CD4-positive, alpha-beta T cell (primary cell): ENCODE measurements at regions of chr1 and their contacts with region 1.

Region 1: GRCh38 chr1:8026153-8026975 is at the start of gene ERRFI1:
- DNase-seq: peak; percentile 67 to 94 (median 84)
- ATAC-seq: peak; percentile 88
- H3K4me3 ChIP-seq: peak within 1 kb of the TSS; percentile 48
- H3K4me3 Mint-ChIP-seq: peak within 1 kb of the TSS; percentile 92
- H3K27ac ChIP-seq: no peak within 1 kb of the TSS
- H3K27ac Mint-ChIP-seq: peak within 1 kb of the TSS; percentile 48
- H3K4me1 ChIP-seq: peaks cover 13% of the 10 kb centered on the region
- H3K4me1 Mint-ChIP-seq: peaks cover 13% of the 10 kb centered on the region
- H3K27me3 ChIP-seq: peaks cover 3 to 14% of the 10 kb centered on the region in 2 experiments
- H3K27me3 Mint-ChIP-seq: peaks cover 30% of the 10 kb centered on the region
- CTCF ChIP-seq: no peak
- total RNA-seq, gene ERRFI1: 3.6 TPM

Region 2: GRCh38 chr1:7975212-7975865 is 51.0 kb before region 1 on chr1:
- CTCF ChIA-PET with region 1: no interaction called
- POLR2A ChIA-PET with region 1: no interaction called
- intact Hi-C with region 1: no loop called
- DNase-seq: peak in 4 of 14 experiments; percentile 18 to 59 (median 42)
- ATAC-seq: peak; percentile 41
- H3K4me3 ChIP-seq: no peak overlapping the region
- H3K4me3 Mint-ChIP-seq: no peak overlapping the region
- H3K27ac ChIP-seq: no peak overlapping the region
- H3K27ac Mint-ChIP-seq: peak overlapping the region; percentile 24
- H3K4me1 ChIP-seq: no peaks in the 10 kb centered on the region
- H3K4me1 Mint-ChIP-seq: peaks cover 5% of the 10 kb centered on the region
- H3K27me3 ChIP-seq: no peaks in the 10 kb centered on the region
- H3K27me3 Mint-ChIP-seq: no peaks in the 10 kb centered on the region
- CTCF ChIP-seq: peak; percentile 51

Region 3: GRCh38 chr1:7992885-7993284 is 33.5 kb before region 1 on chr1:
- CTCF ChIA-PET with region 1: no interaction called
- POLR2A ChIA-PET with region 1: no interaction called
- intact Hi-C with region 1: no loop called
- DNase-seq: no peak
- ATAC-seq: no peak
- H3K4me3 ChIP-seq: no peak overlapping the region
- H3K4me3 Mint-ChIP-seq: no peak overlapping the region
- H3K27ac ChIP-seq: no peak overlapping the region
- H3K27ac Mint-ChIP-seq: no peak overlapping the region
- H3K4me1 ChIP-seq: no peaks in the 10 kb centered on the region
- H3K4me1 Mint-ChIP-seq: no peaks in the 10 kb centered on the region
- H3K27me3 ChIP-seq: no peaks in the 10 kb centered on the region
- H3K27me3 Mint-ChIP-seq: no peaks in the 10 kb centered on the region
- CTCF ChIP-seq: no peak

Region 4: GRCh38 chr1:8154621-8155052 is 128.3 kb after region 1 on chr1:
- CTCF ChIA-PET with region 1: no interaction called
- POLR2A ChIA-PET with region 1: no interaction called
- intact Hi-C with region 1: loop called in 1 of 2 experiments (anchors 2 kb)
- DNase-seq: no peak
- ATAC-seq: no peak
- H3K4me3 ChIP-seq: no peak overlapping the region
- H3K4me3 Mint-ChIP-seq: no peak overlapping the region
- H3K27ac ChIP-seq: no peak overlapping the region
- H3K27ac Mint-ChIP-seq: peak overlapping the region; percentile 34
- H3K4me1 ChIP-seq: peaks cover 53% of the 10 kb centered on the region
- H3K4me1 Mint-ChIP-seq: peaks cover 51% of the 10 kb centered on the region
- H3K27me3 ChIP-seq: no peaks in the 10 kb centered on the region
- H3K27me3 Mint-ChIP-seq: peaks cover 15% of the 10 kb centered on the region
- CTCF ChIP-seq: no peak

Region 5: DNA sequence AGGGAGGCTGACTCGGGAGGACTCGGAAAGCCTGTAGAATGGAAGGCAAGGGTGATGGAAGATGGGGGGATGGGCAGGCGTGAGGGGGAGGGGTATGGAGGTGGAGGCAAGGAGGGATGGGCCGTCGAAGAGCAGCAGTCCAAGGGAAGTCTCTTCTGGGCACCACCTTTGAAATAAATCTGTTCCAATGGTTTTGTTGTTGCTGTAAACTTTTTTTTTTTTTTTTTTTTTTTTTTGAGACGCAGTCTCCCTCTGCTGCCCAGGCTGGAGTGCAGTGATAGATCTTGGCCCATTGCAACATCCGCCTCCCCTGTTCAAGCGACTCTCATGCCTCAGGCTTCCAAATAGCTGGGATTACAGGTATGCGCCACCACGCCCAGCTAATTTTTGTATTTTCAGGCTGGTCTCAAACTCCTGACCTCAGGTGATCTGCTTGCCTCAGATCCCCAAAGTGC is 212.5 kb after region 1 on chr1:
- CTCF ChIA-PET with region 1: no interaction called
- POLR2A ChIA-PET with region 1: no interaction called
- intact Hi-C with region 1: loop called in 1 of 2 experiments (anchors 5 kb)
- DNase-seq: no peak
- ATAC-seq: no peak
- H3K4me3 ChIP-seq: no peak overlapping the region
- H3K4me3 Mint-ChIP-seq: no peak overlapping the region
- H3K27ac ChIP-seq: no peak overlapping the region
- H3K27ac Mint-ChIP-seq: no peak overlapping the region
- H3K4me1 ChIP-seq: peaks cover 5% of the 10 kb centered on the region
- H3K4me1 Mint-ChIP-seq: no peaks in the 10 kb centered on the region
- H3K27me3 ChIP-seq: peaks cover 0 to 3% of the 10 kb centered on the region in 2 experiments
- H3K27me3 Mint-ChIP-seq: no peaks in the 10 kb centered on the region
- CTCF ChIP-seq: no peak

Region 6: DNA sequence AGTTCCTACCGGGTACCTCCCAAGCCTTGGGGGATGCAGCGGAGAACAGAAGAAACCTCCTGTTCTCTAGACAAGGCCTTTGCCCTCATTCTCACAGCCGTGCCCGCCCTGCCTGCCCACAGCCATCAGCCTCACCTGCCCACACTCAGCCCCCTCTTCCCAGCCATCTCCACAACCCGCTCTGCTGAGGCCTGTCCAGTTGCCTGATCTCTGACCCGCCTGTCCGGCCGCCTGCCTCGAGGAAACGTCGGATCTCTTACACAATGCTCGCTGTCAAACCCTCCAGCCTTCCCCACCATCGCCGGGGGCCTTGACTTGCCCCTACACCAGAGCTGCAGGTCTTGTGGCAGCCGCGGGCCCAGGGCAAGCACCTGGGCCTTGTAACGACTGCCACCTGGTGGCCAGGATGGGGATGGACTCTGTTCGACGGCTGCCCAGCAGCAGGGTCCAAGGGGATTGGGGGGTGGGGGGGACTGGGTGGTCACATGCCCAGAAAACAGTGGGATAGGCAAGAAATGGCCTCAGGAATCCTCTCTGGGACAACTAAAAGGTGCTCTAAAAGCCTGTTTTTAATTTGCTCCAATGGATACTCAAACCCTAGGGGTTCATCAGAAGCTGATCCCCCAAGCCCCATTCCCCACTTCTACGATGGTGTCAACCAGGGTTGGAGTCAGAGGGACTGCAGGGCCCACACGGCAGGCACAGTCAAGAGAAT is 322.6 kb after region 1 on chr1:
- CTCF ChIA-PET with region 1: interaction called, 16 read pairs
- POLR2A ChIA-PET with region 1: interaction called, 3 read pairs
- intact Hi-C with region 1: loop called (anchors 1 kb)
- DNase-seq: peak; percentile 60 to 84 (median 66)
- ATAC-seq: peak; percentile 96
- H3K4me3 ChIP-seq: no peak overlapping the region
- H3K4me3 Mint-ChIP-seq: no peak overlapping the region
- H3K27ac ChIP-seq: no peak overlapping the region
- H3K27ac Mint-ChIP-seq: no peak overlapping the region
- H3K4me1 ChIP-seq: peaks cover 6% of the 10 kb centered on the region
- H3K4me1 Mint-ChIP-seq: peaks cover 5% of the 10 kb centered on the region
- H3K27me3 ChIP-seq: no peaks in the 10 kb centered on the region
- H3K27me3 Mint-ChIP-seq: no peaks in the 10 kb centered on the region
- CTCF ChIP-seq: peak; percentile 83